PC-3 (cell line): ENCODE measurements at regions of chr2 and their contacts with region 1.

Region 1: GRCh38 chr2:57906152-57906732 is 140.4 kb upstream of the VRK2 start:
- DNase-seq: peak; percentile 82
- ATAC-seq: peak; percentile 91
- H3K4me3 ChIP-seq: no peak overlapping the region
- H3K27ac ChIP-seq: no peak overlapping the region
- H3K4me1 ChIP-seq: peaks cover 28% of the 10 kb centered on the region
- H3K27me3 ChIP-seq: no peaks in the 10 kb centered on the region
- CTCF ChIP-seq: peak; percentile 93

Region 2: GRCh38 chr2:57465067-57465466 is 441.2 kb before region 1 on chr2:
- CTCF ChIA-PET with region 1: no interaction called
- POLR2A ChIA-PET with region 1: no interaction called
- intact Hi-C with region 1: no loop called
- DNase-seq: no peak
- ATAC-seq: no peak
- H3K4me3 ChIP-seq: peak overlapping the region; percentile 45
- H3K27ac ChIP-seq: no peak overlapping the region
- H3K4me1 ChIP-seq: no peaks in the 10 kb centered on the region
- H3K27me3 ChIP-seq: peaks cover 67% of the 10 kb centered on the region
- CTCF ChIP-seq: no peak

Region 3: GRCh38 chr2:57759822-57760300 is 146.4 kb before region 1 on chr2:
- CTCF ChIA-PET with region 1: interaction called, 7 read pairs
- POLR2A ChIA-PET with region 1: no interaction called
- intact Hi-C with region 1: loop called (anchors 1 kb)
- DNase-seq: peak; percentile 93
- ATAC-seq: peak; percentile 96
- H3K4me3 ChIP-seq: peak overlapping the region; percentile 45; the same call in 1 of the 2 replicates
- H3K27ac ChIP-seq: peak overlapping the region; percentile 54
- H3K4me1 ChIP-seq: peaks cover 23% of the 10 kb centered on the region
- H3K27me3 ChIP-seq: no peaks in the 10 kb centered on the region
- CTCF ChIP-seq: peak; percentile 95

Region 4: GRCh38 chr2:57869758-57870344 is 36.4 kb before region 1 on chr2:
- CTCF ChIA-PET with region 1: no interaction called
- POLR2A ChIA-PET with region 1: no interaction called
- intact Hi-C with region 1: loop called (anchors 2 kb)
- DNase-seq: peak; percentile 77
- ATAC-seq: no peak
- H3K4me3 ChIP-seq: no peak overlapping the region
- H3K27ac ChIP-seq: peak overlapping the region; percentile 97
- H3K4me1 ChIP-seq: peaks cover 68% of the 10 kb centered on the region
- H3K27me3 ChIP-seq: no peaks in the 10 kb centered on the region
- CTCF ChIP-seq: no peak

Region 5: DNA sequence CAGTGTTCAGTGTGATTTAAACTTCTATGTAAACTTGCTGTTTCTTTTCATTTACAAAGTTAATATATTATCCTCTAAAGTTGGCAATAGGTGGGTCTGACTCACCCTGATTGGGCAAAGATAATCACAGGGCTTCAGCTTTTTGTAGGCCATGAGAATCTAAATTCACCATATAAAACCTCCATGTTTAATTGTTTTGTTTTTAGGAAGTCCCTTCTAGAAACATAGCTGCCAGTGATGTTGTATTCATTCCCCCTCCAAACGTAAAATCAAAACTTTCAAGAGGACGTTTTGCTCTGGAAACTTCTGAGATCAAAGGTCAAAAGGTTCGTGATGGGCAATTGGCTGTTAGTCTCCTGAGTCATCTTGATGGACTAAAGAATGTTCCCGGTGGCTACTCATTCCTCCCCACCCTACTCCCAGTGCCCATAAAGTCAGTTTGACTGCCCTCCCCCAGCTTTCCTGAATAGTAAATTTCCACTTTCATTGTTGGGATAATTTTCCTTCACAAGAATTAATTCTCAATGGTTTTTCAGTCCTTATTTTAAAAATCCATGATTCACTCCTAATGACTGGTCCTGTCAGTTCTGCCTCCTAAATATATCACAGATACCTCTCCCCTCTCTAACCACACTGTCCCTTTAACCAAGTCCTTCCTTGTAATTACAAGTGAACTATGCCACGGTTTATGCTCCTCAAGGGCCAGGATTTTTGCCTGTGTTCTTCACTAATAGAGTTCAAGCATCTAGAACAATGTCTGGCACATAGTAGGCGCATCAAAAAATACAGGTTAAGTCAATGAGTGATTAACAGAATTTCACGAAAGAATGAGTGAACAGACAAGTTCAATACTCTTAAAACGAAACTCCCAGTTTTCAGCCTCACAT is 24.0 kb before region 1 on chr2:
- CTCF ChIA-PET with region 1: no interaction called
- POLR2A ChIA-PET with region 1: no interaction called
- intact Hi-C with region 1: loop called (anchors 2 kb)
- DNase-seq: peak; percentile 95
- ATAC-seq: peak; percentile 76
- H3K4me3 ChIP-seq: peak overlapping the region; percentile 49
- H3K27ac ChIP-seq: peak overlapping the region; percentile 97
- H3K4me1 ChIP-seq: peaks cover 84% of the 10 kb centered on the region
- H3K27me3 ChIP-seq: no peaks in the 10 kb centered on the region
- CTCF ChIP-seq: no peak

Region 6: GRCh38 chr2:58019209-58019608 is 113.0 kb after region 1 on chr2:
- CTCF ChIA-PET with region 1: no interaction called
- POLR2A ChIA-PET with region 1: no interaction called
- intact Hi-C with region 1: no loop called
- DNase-seq: peak; percentile 42
- ATAC-seq: peak; percentile 84
- H3K4me3 ChIP-seq: no peak overlapping the region
- H3K27ac ChIP-seq: no peak overlapping the region
- H3K4me1 ChIP-seq: peaks cover 15% of the 10 kb centered on the region
- H3K27me3 ChIP-seq: no peaks in the 10 kb centered on the region
- CTCF ChIP-seq: no peak

Region 7: GRCh38 chr2:58107803-58108710 is 201.8 kb after region 1 on chr2:
- CTCF ChIA-PET with region 1: no interaction called
- POLR2A ChIA-PET with region 1: no interaction called
- intact Hi-C with region 1: loop called (anchors 10 kb)
- DNase-seq: peak; percentile 93
- ATAC-seq: peak; percentile 79
- H3K4me3 ChIP-seq: peak overlapping the region; percentile 25
- H3K27ac ChIP-seq: peak overlapping the region; percentile 99
- H3K4me1 ChIP-seq: peaks cover 63% of the 10 kb centered on the region
- H3K27me3 ChIP-seq: no peaks in the 10 kb centered on the region
- CTCF ChIP-seq: no peak

Region 8: DNA sequence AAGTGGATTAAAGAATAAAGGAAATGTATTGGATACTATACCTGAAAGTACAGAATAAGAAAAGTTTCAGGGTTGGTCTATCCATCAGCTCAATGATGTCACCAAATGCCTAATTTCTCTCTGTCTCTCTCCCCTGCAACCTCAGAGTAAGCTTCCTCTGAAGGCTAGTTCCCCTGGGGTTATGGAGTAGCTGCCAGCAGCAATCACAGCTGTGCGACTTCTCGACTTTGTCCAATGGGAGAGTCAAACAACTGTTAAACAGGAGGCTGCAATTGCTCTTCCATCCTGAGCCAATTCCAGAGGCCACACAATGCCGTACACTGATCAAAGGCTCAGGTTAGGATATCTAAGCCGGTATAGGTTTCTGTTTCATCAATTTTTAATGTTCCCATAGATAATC is 430.2 kb after region 1 on chr2:
- CTCF ChIA-PET with region 1: interaction called, 3 read pairs
- POLR2A ChIA-PET with region 1: no interaction called
- intact Hi-C with region 1: loop called (anchors 2 kb)
- DNase-seq: no peak
- ATAC-seq: no peak
- H3K4me3 ChIP-seq: no peak overlapping the region
- H3K27ac ChIP-seq: no peak overlapping the region
- H3K4me1 ChIP-seq: peaks cover 25% of the 10 kb centered on the region
- H3K27me3 ChIP-seq: no peaks in the 10 kb centered on the region
- CTCF ChIP-seq: no peak

Region 9: GRCh38 chr2:58680755-58681310 is 774.6 kb after region 1 on chr2:
- CTCF ChIA-PET with region 1: no interaction called
- POLR2A ChIA-PET with region 1: no interaction called
- intact Hi-C with region 1: loop called (anchors 2 kb)
- DNase-seq: peak; percentile 58
- ATAC-seq: peak; percentile 75
- H3K4me3 ChIP-seq: no peak overlapping the region
- H3K27ac ChIP-seq: no peak overlapping the region
- H3K4me1 ChIP-seq: no peaks in the 10 kb centered on the region
- H3K27me3 ChIP-seq: no peaks in the 10 kb centered on the region
- CTCF ChIP-seq: peak; percentile 69